ENCODE measurements at regions of chr4 and their contacts with region 1.

Region 1: GRCh38 chr4:37686373-37687193 is at the start of gene RELL1:
- DNase-seq: peak; percentile 100
- total RNA-seq, gene RELL1: 33.6 to 40.5 TPM

Region 2: GRCh38 chr4:37641916-37642849 is 44.4 kb before region 1 on chr4:
- intact Hi-C with region 1: loop called in 1 of 2 experiments (anchors 1 kb)
- DNase-seq: no peak

Region 3: GRCh38 chr4:37675587-37676290 is 10.8 kb before region 1 on chr4:
- intact Hi-C with region 1: no loop called
- DNase-seq: no peak

Measured in posterior vena cava (tissue), 2 donors.